MCF 10A (cell line): ENCODE measurements at regions of chr7 and their contacts with region 1.

Region 1: GRCh38 chr7:16564909-16565426 is 38.3 kb downstream of the LRRC72 start:
- DNase-seq: peak; percentile 53
- H3K4me3 Mint-ChIP-seq: no peak overlapping the region
- H3K27ac Mint-ChIP-seq: no peak overlapping the region
- H3K4me1 Mint-ChIP-seq: no peaks in the 10 kb centered on the region
- H3K27me3 Mint-ChIP-seq: peaks cover 12% of the 10 kb centered on the region
- CTCF ChIP-seq: peak; percentile 54

Region 2: GRCh38 chr7:16071246-16071857 is 493.6 kb before region 1 on chr7:
- CTCF ChIA-PET with region 1: interaction called, 19 read pairs
- POLR2A ChIA-PET with region 1: no interaction called
- intact Hi-C with region 1: no loop called
- DNase-seq: peak; percentile 61
- H3K4me3 Mint-ChIP-seq: no peak overlapping the region
- H3K27ac Mint-ChIP-seq: no peak overlapping the region
- H3K4me1 Mint-ChIP-seq: peaks cover 4% of the 10 kb centered on the region
- H3K27me3 Mint-ChIP-seq: peaks cover 42% of the 10 kb centered on the region
- CTCF ChIP-seq: peak; percentile 71

Region 3: DNA sequence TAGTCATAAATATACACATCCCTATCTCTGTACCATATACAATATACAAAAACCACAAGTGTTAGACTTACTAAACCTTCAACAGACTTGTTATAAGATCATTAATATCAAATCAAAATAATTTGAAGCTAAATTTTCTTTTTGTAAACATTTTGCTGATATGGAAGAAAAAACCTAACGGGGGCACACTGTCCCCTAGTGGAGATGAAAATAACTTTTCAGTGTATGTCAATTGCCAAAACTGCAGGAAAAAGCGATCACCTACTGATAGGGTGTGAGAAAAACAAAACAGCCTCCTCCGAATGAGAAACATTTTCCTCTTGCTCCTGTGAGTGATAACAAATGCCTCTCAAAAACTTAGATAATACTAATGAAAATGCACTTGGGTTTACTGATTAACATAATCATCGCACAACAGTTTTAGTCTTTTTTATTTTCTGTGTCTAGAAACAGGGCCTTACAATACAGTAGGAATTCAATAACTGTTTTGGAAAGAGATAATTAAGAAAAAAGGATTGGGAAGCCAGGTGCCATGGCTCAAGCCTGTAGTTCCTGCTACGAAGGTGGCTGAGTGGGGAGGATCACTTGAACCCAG is 466.3 kb before region 1 on chr7:
- CTCF ChIA-PET with region 1: interaction called, 24 read pairs
- POLR2A ChIA-PET with region 1: no interaction called
- intact Hi-C with region 1: no loop called
- DNase-seq: peak; percentile 59
- H3K4me3 Mint-ChIP-seq: no peak overlapping the region
- H3K27ac Mint-ChIP-seq: no peak overlapping the region
- H3K4me1 Mint-ChIP-seq: peaks cover 4% of the 10 kb centered on the region
- H3K27me3 Mint-ChIP-seq: no peaks in the 10 kb centered on the region
- CTCF ChIP-seq: peak; percentile 82

Region 4: DNA sequence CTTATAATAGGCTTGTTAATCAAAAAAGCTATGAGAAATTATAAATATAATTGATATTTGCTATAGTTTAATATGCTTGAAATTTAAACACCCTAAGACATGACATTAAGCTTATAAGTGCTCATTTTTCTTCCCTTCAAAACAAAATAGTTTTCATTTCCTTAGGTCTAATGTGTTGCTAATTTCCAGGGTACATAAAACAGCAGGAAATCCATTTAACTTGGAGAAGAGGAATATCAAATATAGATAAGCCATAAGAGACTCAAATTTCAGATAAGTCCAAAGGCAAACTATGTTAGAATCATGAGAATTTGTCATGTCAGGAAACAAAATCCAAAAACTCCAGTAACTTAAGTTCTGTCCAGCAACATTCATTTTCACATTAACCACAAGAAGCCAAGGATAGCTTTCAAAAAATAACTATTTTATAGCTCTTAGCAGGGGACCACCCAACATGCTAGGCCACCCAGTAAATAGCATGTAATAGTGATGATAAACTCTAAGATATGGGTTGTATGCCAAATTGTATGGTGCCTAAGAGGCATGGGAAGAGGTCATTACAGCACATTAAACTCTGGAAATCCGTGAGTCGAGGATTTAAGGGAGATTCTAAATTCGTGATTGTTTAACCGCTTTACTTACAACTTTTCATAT is 441.7 kb before region 1 on chr7:
- CTCF ChIA-PET with region 1: interaction called, 47 read pairs
- POLR2A ChIA-PET with region 1: no interaction called
- intact Hi-C with region 1: no loop called
- DNase-seq: no peak
- H3K4me3 Mint-ChIP-seq: no peak overlapping the region
- H3K27ac Mint-ChIP-seq: no peak overlapping the region
- H3K4me1 Mint-ChIP-seq: no peaks in the 10 kb centered on the region
- H3K27me3 Mint-ChIP-seq: no peaks in the 10 kb centered on the region
- CTCF ChIP-seq: no peak

Region 5: DNA sequence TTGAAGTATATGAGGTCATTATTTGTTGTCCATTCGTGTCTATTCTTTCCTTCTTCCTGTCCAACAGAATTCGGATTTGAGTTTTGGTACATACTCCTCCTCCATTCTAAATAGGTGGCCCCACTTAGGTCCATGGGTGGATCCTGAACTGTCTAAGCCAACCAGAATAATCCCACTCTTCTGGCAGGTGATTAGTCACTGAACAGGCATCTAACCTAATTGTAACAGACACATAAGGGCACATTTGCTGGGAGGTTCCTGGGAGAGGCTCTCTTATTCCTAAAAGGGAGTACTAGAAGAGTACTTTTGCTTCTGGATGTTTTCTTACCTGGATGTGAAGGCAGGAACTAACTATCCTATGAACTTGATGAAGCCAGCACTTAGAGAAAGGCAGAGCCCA is 21.5 kb before region 1 on chr7:
- CTCF ChIA-PET with region 1: interaction called, 34 read pairs
- POLR2A ChIA-PET with region 1: interaction called, 3 read pairs
- intact Hi-C with region 1: no loop called
- DNase-seq: no peak
- H3K4me3 Mint-ChIP-seq: no peak overlapping the region
- H3K27ac Mint-ChIP-seq: no peak overlapping the region
- H3K4me1 Mint-ChIP-seq: no peaks in the 10 kb centered on the region
- H3K27me3 Mint-ChIP-seq: no peaks in the 10 kb centered on the region
- CTCF ChIP-seq: no peak

Region 6: GRCh38 chr7:17301471-17302456 is 736.8 kb after region 1 on chr7:
- CTCF ChIA-PET with region 1: no interaction called
- POLR2A ChIA-PET with region 1: no interaction called
- intact Hi-C with region 1: no loop called
- DNase-seq: peak; percentile 63
- H3K4me3 Mint-ChIP-seq: peak overlapping the region; percentile 57
- H3K27ac Mint-ChIP-seq: peak overlapping the region; percentile 72
- H3K4me1 Mint-ChIP-seq: peaks cover 38% of the 10 kb centered on the region
- H3K27me3 Mint-ChIP-seq: no peaks in the 10 kb centered on the region
- CTCF ChIP-seq: peak; percentile 58